HEK293T (cell line): ENCODE measurements at regions of chr5 and their contacts with region 1.

Region 1: GRCh38 chr5:148957591-148958202 is 105.2 kb downstream of the SH3TC2 start:
- DNase-seq: peak; percentile 67

Region 2: GRCh38 chr5:148740966-148741742 is 216.5 kb before region 1 on chr5:
- CTCF ChIA-PET with region 1: interaction called, 81 read pairs
- POLR2A ChIA-PET with region 1: no interaction called
- DNase-seq: peak; percentile 27

Region 3: GRCh38 chr5:148979104-148979723 is 21.5 kb after region 1 on chr5:
- CTCF ChIA-PET with region 1: interaction called, 20 read pairs
- POLR2A ChIA-PET with region 1: no interaction called
- DNase-seq: no peak

Region 4: GRCh38 chr5:149035372-149035790 is 77.7 kb after region 1 on chr5:
- CTCF ChIA-PET with region 1: interaction called, 14 read pairs
- POLR2A ChIA-PET with region 1: no interaction called
- DNase-seq: peak; percentile 72

Region 5: DNA sequence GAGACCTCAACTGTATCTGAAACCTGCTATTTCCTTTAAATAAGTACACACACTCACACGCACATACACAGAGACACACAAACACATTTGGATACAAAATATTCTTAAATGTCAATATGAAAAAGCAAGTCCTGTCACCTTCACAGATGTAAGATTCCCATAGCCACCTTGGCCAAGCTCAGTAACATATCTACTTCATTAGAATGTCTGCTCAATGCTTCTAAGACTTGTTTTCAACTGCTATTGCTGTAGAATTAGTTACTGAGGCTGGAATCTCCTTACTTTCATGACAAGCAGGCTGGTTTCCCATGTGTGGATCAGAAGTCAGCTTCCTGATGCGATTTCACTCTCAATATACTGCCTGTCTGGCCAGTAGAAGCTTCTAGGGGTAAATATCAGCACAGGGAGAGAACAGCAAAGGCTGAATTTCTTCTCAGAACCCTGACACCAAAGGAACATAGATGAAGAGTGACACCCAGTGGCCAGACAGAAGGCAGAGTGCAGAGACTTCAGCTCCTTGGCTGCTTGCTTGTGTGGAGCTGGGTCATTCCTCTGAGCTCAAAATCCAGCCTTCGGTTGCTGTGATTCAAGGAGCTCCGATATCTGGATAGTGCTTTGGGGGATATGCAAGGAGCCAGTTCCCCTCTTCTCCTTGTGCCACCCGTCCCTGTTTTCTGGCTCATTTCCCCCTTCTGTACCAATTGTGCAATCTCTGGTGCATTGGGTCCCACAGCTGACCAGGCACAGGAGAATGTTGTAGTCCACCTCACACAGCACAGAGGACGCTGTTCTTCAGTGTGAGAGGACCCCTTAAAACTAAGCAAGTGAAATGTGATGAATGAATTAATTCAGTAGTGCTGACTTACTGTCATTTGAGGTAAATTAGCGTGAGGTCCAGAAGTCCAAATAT is 157.0 kb after region 1 on chr5:
- CTCF ChIA-PET with region 1: interaction called, 12 read pairs
- POLR2A ChIA-PET with region 1: no interaction called
- DNase-seq: peak; percentile 66